Activated T-helper 1 cell treated with anti-CD3 and anti-CD28 coated beads, Interleukin-12 subunit alpha, Interleukin-12 subunit beta, Interleukin-2, Interleukin-4 antibody, amounts not matched to agents 30 ng/mL and 10 ng/mL and 1 ng/mL, durations not matched to agents 14 hours and 24 hours and 36 hours (primary cell): ENCODE measurements at regions of chr19 and their contacts with region 1.

Region 1: DNA sequence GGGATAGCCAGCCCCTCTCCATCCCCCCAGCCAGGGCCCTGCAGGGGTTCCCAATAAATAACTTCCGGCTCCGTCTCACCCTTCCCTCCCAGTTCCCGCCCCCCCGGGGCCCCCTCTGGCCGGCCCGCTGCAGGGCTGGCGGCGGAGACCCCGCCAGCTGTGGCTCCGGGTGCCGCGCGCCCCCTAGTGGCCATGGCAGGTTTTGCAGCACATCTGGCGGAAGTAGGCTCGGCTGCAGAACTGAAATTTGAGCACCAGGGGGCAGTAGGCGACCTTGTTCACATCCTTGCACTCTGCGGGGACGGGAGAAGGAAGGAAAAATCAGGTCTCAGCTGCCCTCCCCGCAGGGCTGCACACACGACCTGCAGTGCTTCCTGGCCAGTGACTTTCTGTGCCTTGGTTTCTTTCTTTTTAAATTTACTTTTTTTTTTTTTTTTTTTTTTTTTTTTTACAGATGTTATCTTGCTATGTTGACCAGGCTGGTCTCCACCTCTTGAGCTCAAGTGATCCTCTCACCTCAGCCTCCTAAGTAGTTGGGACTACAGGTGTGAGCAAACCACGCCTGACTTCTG is 3.6 kb upstream of the MYO1F start:
- DNase-seq: peak; percentile 80
- H3K4me3 Mint-ChIP-seq: no peak overlapping the region
- H3K27ac Mint-ChIP-seq: no peak overlapping the region
- H3K4me1 Mint-ChIP-seq: peaks cover 26% of the 10 kb centered on the region
- H3K27me3 Mint-ChIP-seq: peaks cover 3% of the 10 kb centered on the region

Region 2: GRCh38 chr19:8355631-8356402 is 225.0 kb before region 1 on chr19:
- intact Hi-C with region 1: loop called (anchors 5 kb)
- DNase-seq: no peak
- H3K4me3 Mint-ChIP-seq: no peak overlapping the region
- H3K27ac Mint-ChIP-seq: no peak overlapping the region
- H3K4me1 Mint-ChIP-seq: peaks cover 9% of the 10 kb centered on the region
- H3K27me3 Mint-ChIP-seq: peaks cover 18% of the 10 kb centered on the region

Region 3: GRCh38 chr19:8513687-8514504 is 66.9 kb before region 1 on chr19 and contains the start of gene ZNF414:
- intact Hi-C with region 1: loop called (anchors 2 kb)
- DNase-seq: peak; percentile 92
- H3K4me3 Mint-ChIP-seq: peak within 1 kb of the TSS; percentile 93
- H3K27ac Mint-ChIP-seq: peak within 1 kb of the TSS; percentile 98
- H3K4me1 Mint-ChIP-seq: peaks cover 52% of the 10 kb centered on the region
- H3K27me3 Mint-ChIP-seq: no peaks in the 10 kb centered on the region
- total RNA-seq, gene ZNF414: 22.1 and 23.6 TPM in 2 replicates

Region 4: DNA sequence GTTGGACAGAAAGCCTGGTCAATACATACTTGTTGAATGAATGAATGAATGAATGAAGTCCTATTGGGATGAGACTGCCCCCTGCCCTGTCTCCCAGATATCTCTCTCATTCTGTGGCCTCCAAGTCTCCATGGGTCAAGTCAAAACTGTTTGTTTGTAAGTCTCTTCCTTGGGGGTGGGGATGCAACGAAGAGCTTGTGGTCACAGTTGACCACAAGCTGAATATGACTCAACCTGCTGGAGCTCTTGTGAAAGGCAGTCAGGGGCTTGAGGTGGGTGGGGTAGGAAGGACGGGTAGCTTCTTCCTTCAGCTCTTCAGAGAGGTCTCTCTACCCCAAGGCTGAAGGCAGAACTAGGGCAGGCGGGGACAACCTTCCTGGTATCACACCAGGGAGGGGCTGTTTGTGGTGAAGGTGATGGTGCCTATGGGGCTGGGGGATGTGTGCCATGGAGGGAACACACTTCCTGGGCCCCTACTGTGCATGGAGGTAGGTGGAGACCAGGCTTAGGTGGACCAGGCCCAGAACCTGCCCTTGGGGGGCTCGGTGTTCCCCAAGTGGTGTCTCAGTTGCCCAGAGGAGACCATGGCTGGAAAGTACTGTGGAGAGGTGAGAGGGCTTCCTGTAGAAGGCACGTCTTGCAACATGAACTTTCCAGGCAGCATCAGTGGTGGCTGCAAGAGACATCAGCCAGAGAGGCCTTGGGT is 11.6 kb before region 1 on chr19:
- intact Hi-C with region 1: loop called (anchors 1 kb)
- DNase-seq: peak; percentile 78
- H3K4me3 Mint-ChIP-seq: peak overlapping the region; percentile 75
- H3K27ac Mint-ChIP-seq: peak overlapping the region; percentile 97
- H3K4me1 Mint-ChIP-seq: peaks cover 62% of the 10 kb centered on the region
- H3K27me3 Mint-ChIP-seq: peaks cover 2% of the 10 kb centered on the region

Region 5: DNA sequence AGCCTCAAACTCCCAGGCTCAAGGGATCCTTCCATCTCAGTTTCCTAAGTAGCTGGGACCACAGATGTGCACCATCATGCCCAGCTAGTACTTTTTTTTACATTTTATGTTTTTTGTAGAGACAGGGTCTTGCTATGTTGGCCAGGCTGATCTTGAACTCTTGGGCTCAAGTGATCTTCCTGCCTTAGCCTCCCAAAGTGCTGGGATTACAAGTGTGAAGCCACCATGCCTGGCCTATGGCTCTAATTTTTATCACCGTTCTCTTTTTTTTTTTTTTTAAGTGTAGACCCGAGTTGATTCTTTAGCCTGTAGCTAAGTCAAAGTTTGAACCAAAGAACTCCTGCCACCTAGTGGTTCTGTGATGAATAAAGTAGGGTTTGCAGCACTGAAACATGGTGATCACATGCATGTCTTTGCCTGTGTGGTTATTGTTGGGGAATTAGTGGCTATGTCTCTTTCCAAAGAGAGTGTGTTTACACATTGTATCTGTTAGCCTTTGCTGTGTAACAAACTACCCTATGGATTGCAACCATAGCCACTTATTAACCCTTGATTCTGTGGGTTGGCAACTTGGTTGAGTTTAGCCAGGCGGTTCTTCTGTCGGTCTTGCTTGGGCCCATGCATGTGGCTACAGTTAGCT is 61.2 kb after region 1 on chr19:
- intact Hi-C with region 1: loop called (anchors 1 kb)
- DNase-seq: no peak
- H3K4me3 Mint-ChIP-seq: no peak overlapping the region
- H3K27ac Mint-ChIP-seq: no peak overlapping the region
- H3K4me1 Mint-ChIP-seq: no peaks in the 10 kb centered on the region
- H3K27me3 Mint-ChIP-seq: peaks cover 14% of the 10 kb centered on the region

Region 6: GRCh38 chr19:8697671-8698432 is 117.1 kb after region 1 on chr19:
- intact Hi-C with region 1: loop called (anchors 2 kb)
- DNase-seq: no peak
- H3K4me3 Mint-ChIP-seq: no peak overlapping the region
- H3K27ac Mint-ChIP-seq: no peak overlapping the region
- H3K4me1 Mint-ChIP-seq: peaks cover 66% of the 10 kb centered on the region
- H3K27me3 Mint-ChIP-seq: peaks cover 4% of the 10 kb centered on the region